WTC11 (cell line): ENCODE measurements at regions of chr1 and their contacts with region 1.

Region 1: GRCh38 chr1:16078925-16079656 is 5.6 kb upstream of the FAM131C start:
- DNase-seq: peak; percentile 89
- ATAC-seq: peak; percentile 78
- H3K4me3 Mint-ChIP-seq: no peak overlapping the region
- H3K27ac Mint-ChIP-seq: no peak overlapping the region
- H3K4me1 Mint-ChIP-seq: peaks cover 9% of the 10 kb centered on the region
- H3K27me3 Mint-ChIP-seq: peaks cover 26% of the 10 kb centered on the region
- CTCF ChIP-seq: peak; percentile 87

Region 2: DNA sequence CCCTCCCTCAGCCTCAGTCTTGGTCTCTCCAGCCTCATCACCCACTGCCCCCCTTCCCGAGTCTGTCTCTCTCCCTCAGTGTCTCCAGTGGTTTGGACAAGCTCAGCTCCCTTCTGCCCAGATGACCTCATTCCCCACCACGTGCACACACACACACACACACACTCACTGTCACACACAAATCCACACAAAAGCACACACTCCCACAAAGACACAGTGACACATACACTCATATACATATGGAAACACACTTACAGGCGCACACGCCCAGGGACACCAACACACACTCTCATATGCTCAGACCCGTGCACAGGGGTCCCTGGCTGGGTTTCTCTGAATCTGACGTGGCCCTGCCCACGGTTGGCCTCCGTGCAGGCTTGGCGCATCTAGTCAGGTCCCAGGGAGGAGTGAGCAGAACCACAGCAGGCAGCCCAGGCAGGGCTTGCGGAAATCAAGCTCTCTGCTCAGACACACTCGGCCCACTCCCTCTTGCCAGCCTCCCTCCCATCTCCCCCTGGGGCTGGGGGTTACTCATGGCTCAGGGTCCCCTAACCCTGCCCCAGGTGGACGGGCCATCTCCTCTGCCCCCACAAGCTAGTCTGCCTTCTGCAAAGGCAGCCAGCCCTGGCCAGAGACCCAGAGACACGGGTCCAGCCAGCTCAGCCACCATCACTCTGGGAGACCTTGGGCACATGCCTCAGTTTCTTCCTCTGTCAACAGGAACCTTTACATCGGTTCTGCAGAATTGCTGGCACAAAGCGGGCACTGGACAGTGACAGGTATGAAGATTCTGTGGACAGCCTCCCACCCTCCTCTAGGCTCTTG is 32.9 kb after region 1 on chr1:
- CTCF ChIA-PET with region 1: interaction called, 61 read pairs
- POLR2A ChIA-PET with region 1: no interaction called
- DNase-seq: no peak
- ATAC-seq: no peak
- H3K4me3 Mint-ChIP-seq: no peak overlapping the region
- H3K27ac Mint-ChIP-seq: no peak overlapping the region
- H3K4me1 Mint-ChIP-seq: peaks cover 34% of the 10 kb centered on the region
- H3K27me3 Mint-ChIP-seq: peaks cover 11% of the 10 kb centered on the region
- CTCF ChIP-seq: no peak

Region 3: DNA sequence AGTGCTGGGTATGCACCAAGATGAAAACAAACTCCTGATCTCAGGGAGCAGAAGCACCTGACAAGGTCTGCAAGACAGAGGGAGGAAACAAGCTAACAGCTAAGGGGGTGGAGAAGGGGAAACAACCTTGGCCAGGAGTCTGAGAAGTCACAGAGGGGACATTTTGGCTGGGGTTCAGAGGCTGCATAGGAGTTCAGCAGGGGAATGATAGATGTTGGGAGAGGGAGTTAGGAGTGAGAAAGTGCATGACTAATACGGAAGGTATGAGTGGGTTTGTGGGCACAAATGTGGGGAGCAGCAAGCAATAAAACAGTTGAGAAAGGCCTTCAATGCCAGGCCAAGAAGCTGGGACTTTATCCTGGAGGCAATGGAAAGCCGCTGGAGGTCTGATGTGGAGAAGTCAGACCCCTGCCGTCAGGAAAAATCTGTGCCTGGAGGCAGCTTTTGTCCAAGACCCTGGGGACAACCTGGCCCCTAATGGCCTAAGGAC is 60.4 kb after region 1 on chr1:
- CTCF ChIA-PET with region 1: interaction called, 204 read pairs
- POLR2A ChIA-PET with region 1: no interaction called
- DNase-seq: no peak
- ATAC-seq: no peak
- H3K4me3 Mint-ChIP-seq: no peak overlapping the region
- H3K27ac Mint-ChIP-seq: peak overlapping the region; percentile 28
- H3K4me1 Mint-ChIP-seq: peaks cover 32% of the 10 kb centered on the region
- H3K27me3 Mint-ChIP-seq: no peaks in the 10 kb centered on the region
- CTCF ChIP-seq: no peak

Region 4: DNA sequence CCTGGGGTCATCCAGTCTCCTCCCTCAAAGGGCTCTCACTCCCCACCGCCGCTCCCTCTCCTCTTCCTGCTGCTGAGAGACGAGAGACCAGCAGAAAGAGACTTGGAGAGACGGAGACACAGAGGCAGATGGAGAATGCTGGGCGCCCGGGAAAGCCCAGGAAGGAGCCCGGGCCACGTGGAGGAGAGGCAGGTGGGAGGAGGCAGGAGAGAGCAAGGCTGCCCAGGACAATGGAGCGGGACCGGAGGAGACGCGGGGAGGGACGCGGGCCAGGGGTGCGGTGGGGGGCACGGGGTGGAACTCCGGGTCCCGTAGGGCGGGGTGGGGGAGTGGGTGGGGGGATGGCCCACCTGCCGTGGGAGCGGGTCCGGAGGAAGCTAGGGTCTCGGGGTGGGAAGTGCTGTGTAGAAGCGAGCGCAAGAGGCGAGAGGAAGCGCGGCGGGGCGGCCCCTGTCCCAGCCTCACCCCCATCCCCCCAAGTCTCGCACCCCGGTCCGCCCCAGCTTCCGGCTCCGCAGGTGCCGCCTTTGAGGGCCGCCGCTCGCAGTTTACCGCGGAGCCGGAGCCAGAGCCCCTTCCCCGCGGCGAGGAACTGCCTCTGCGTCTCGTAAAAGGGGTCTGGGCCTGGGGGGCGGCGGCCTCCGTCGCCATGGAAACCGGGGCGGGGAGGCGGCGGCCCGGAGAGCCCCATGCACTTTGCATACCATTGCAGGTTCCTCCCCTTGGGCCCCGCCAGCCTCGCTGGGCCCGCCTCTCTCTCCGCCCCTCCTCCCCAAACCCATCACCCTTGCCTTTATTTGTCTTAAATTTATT is 88.4 kb after region 1 on chr1:
- CTCF ChIA-PET with region 1: interaction called, 28 read pairs
- POLR2A ChIA-PET with region 1: interaction called, 4 read pairs
- DNase-seq: peak; percentile 89
- ATAC-seq: peak; percentile 80
- H3K4me3 Mint-ChIP-seq: peak overlapping the region; percentile 69
- H3K27ac Mint-ChIP-seq: no peak overlapping the region
- H3K4me1 Mint-ChIP-seq: peaks cover 48% of the 10 kb centered on the region
- H3K27me3 Mint-ChIP-seq: no peaks in the 10 kb centered on the region
- CTCF ChIP-seq: no peak

Region 5: GRCh38 chr1:16187748-16188401 is 108.8 kb after region 1 on chr1:
- CTCF ChIA-PET with region 1: interaction called, 161 read pairs
- POLR2A ChIA-PET with region 1: no interaction called
- DNase-seq: peak; percentile 85
- ATAC-seq: peak; percentile 84
- H3K4me3 Mint-ChIP-seq: no peak overlapping the region
- H3K27ac Mint-ChIP-seq: no peak overlapping the region
- H3K4me1 Mint-ChIP-seq: no peaks in the 10 kb centered on the region
- H3K27me3 Mint-ChIP-seq: no peaks in the 10 kb centered on the region; the same call in 1 of the 2 replicates
- CTCF ChIP-seq: peak; percentile 90

Region 6: GRCh38 chr1:16243936-16244649 is 165.0 kb after region 1 on chr1:
- CTCF ChIA-PET with region 1: interaction called, 13 read pairs
- POLR2A ChIA-PET with region 1: no interaction called
- DNase-seq: peak; percentile 85
- ATAC-seq: peak; percentile 81
- H3K4me3 Mint-ChIP-seq: no peak overlapping the region
- H3K27ac Mint-ChIP-seq: 0 out of 2 replicates have a peak overlapping the region, but pooled peaks have one; percentile 26
- H3K4me1 Mint-ChIP-seq: peaks cover 6% of the 10 kb centered on the region; the same call in 1 of the 2 replicates
- H3K27me3 Mint-ChIP-seq: no peaks in the 10 kb centered on the region
- CTCF ChIP-seq: peak; percentile 79